Endothelial cell of umbilical vein (primary cell): ENCODE measurements at regions of chr1 and their contacts with region 1.

Region 1: DNA sequence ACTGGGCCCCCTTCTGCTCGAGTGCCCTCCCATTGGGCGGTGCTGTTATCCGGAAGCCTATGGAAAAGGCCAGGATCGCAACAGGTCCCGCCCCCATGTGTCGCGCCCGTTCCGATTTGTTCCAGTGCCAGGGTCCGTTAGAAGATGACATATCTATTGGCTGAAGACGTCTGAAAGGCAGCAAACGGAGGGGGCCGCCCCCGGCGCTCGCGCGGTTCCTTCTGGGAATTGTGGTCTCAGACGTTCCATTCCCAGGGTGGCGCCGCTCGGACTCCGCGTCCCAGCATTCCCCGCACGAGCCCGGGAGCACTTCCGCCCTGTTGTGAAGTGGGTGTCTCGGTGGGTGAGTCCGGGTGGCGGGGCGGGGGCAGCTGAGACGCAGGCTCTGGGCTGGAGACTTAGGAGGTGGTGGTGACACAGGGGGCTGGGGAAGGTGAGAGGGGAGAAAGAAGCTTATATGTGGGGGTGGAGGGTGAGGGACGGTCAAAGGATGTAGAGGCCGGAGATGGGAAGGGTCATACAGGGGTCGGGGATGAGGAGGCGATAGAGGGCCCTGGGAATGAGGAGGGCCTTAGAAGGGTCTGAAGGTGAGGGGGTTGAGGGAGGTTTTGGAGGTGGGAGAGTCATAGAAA is at the start of gene ZSCAN20:
- DNase-seq: peak; percentile 99
- H3K4me3 ChIP-seq: peak within 1 kb of the TSS; percentile 70 to 73 (median 72)
- H3K27ac ChIP-seq: peak within 1 kb of the TSS; percentile 63
- H3K4me1 ChIP-seq: peaks cover 13% of the 10 kb centered on the region
- H3K27me3 ChIP-seq: no peaks in the 10 kb centered on the region
- CTCF ChIP-seq: no peak
- POLR2A ChIP-seq: peak; percentile 71
- total RNA-seq, gene ZSCAN20: 4.7 and 5.8 TPM in 2 replicates

Region 2: GRCh38 chr1:33127001-33127791 is 345.3 kb before region 1 on chr1:
- CTCF ChIA-PET with region 1: interaction called, 12 read pairs
- POLR2A ChIA-PET with region 1: no interaction called
- dilution Hi-C with region 1: no loop called
- intact Hi-C with region 1: loop called (anchors 1 kb)
- DNase-seq: peak; percentile 99
- H3K4me3 ChIP-seq: peak overlapping the region; percentile 72 to 92 (median 88)
- H3K27ac ChIP-seq: peak overlapping the region; percentile 68
- H3K4me1 ChIP-seq: peaks cover 10% of the 10 kb centered on the region
- H3K27me3 ChIP-seq: peaks cover 0 to 2% of the 10 kb centered on the region in 2 experiments
- CTCF ChIP-seq: peak; percentile 97 to 99
- POLR2A ChIP-seq: peak; percentile 96

Region 3: DNA sequence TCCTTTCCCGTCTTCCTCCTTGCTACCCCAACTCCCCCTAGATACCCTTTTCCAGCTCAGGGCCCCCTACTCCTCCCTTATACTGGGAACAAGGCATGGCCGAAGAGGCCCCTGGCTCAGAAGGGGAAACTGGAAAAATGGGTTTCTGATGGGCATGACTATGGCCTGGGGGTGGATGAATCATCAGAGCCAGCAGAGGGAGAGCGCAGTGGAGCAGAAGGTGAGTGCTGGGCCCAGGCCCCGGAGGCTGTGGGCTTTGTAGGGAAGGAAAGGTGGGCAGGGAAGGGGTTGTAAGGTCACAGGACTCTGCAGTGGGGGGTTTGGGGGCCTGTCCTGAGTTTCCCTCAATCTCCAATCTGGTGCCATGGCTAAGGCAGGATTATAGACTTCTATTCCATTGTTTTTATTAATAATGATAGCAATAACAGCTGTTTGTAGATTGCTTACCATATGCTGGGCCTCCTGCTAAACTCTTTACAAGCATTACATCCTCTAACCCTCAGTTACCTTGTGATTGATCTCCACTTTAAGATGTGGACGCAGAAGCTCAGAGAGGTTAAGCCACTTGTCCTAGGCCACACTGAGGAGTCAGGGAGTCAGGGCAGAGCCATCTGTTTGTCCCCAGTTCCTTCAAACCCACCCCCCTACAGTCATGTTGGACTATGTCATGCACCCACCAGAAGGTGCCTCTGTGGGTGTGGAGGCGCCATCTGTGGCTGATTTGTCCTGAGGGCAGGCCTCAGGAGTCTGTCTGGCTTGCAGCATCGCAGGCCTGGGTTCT is 252.4 kb before region 1 on chr1:
- CTCF ChIA-PET with region 1: interaction called, 16 read pairs
- POLR2A ChIA-PET with region 1: no interaction called
- dilution Hi-C with region 1: no loop called
- intact Hi-C with region 1: loop called (anchors 1 kb)
- DNase-seq: no peak
- H3K4me3 ChIP-seq: no peak overlapping the region
- H3K27ac ChIP-seq: no peak overlapping the region
- H3K4me1 ChIP-seq: peaks cover 5% of the 10 kb centered on the region
- H3K27me3 ChIP-seq: peaks cover 3 to 12% of the 10 kb centered on the region in 2 experiments
- CTCF ChIP-seq: no peak
- POLR2A ChIP-seq: no peak

Region 4: GRCh38 chr1:33367485-33368405 is 104.7 kb before region 1 on chr1:
- CTCF ChIA-PET with region 1: interaction called, 27 read pairs
- POLR2A ChIA-PET with region 1: no interaction called
- dilution Hi-C with region 1: no loop called
- intact Hi-C with region 1: loop called (anchors 1 kb)
- DNase-seq: peak; percentile 67
- H3K4me3 ChIP-seq: no peak overlapping the region
- H3K27ac ChIP-seq: no peak overlapping the region
- H3K4me1 ChIP-seq: no peaks in the 10 kb centered on the region
- H3K27me3 ChIP-seq: no peaks in the 10 kb centered on the region
- CTCF ChIP-seq: peak; percentile 90 to 98
- POLR2A ChIP-seq: no peak

Region 5: GRCh38 chr1:33424205-33424604 is 48.3 kb before region 1 on chr1:
- CTCF ChIA-PET with region 1: no interaction called
- POLR2A ChIA-PET with region 1: no interaction called
- dilution Hi-C with region 1: no loop called
- intact Hi-C with region 1: no loop called
- DNase-seq: peak; percentile 16
- H3K4me3 ChIP-seq: no peak overlapping the region
- H3K27ac ChIP-seq: no peak overlapping the region
- H3K4me1 ChIP-seq: peaks cover 14% of the 10 kb centered on the region
- H3K27me3 ChIP-seq: no peaks in the 10 kb centered on the region
- CTCF ChIP-seq: no peak
- POLR2A ChIP-seq: no peak

Region 6: DNA sequence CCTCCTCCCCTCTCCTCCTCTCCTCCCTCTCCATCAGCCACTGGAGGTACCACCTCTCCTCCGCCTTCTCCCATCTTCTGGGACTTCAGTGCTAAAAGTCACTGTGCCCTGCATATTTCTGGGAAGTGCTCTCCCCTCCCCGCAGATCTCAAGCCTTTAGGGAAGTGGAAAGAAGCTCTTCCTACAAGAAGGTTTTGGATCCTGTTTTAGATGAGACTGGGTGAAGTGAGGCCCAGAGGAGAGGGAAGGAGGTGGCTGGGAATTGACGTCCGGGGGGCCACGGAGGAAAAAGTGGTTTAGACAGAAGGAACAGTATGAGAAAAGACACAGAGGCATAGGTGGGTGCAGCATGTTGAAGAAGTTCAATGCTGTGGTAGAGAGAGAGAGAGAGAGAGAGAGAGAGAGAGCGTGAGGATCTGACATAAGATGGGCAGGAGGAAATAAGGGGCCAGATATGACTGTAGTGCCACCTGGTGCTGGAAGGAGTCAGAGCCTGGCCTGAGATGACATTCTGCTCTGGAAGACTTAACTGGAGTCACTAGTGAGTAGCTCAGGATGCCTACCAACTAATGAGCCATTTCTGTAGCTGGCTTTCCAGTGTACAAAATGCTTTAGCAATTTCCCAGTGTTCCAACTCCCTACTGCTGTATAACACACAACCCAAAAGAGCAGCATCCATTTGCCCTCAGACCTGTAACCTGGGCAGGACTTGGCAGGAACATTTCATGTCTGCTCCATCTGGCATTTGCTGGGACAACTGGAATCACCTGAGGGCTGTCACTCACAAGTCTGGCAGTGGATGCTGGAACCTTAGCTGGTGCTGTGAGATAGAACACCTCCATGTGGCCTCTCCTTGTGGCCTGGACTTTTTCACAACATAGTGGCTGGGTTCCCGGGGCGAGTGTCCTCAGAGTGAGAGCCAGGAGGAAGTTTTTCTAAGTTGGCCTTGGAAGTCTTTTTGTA is 16.6 kb before region 1 on chr1:
- CTCF ChIA-PET with region 1: interaction called, 37 read pairs
- POLR2A ChIA-PET with region 1: no interaction called
- dilution Hi-C with region 1: no loop called
- intact Hi-C with region 1: no loop called
- DNase-seq: peak; percentile 67
- H3K4me3 ChIP-seq: no peak overlapping the region
- H3K27ac ChIP-seq: no peak overlapping the region
- H3K4me1 ChIP-seq: peaks cover 10% of the 10 kb centered on the region
- H3K27me3 ChIP-seq: no peaks in the 10 kb centered on the region
- CTCF ChIP-seq: peak; percentile 68 to 69
- POLR2A ChIP-seq: no peak

Region 7: GRCh38 chr1:33494929-33495328 is 22.5 kb after region 1 on chr1:
- CTCF ChIA-PET with region 1: no interaction called
- POLR2A ChIA-PET with region 1: no interaction called
- dilution Hi-C with region 1: no loop called
- intact Hi-C with region 1: no loop called
- DNase-seq: no peak
- H3K4me3 ChIP-seq: no peak overlapping the region
- H3K27ac ChIP-seq: no peak overlapping the region
- H3K4me1 ChIP-seq: no peaks in the 10 kb centered on the region
- H3K27me3 ChIP-seq: no peaks in the 10 kb centered on the region
- CTCF ChIP-seq: no peak
- POLR2A ChIP-seq: no peak

Region 8: DNA sequence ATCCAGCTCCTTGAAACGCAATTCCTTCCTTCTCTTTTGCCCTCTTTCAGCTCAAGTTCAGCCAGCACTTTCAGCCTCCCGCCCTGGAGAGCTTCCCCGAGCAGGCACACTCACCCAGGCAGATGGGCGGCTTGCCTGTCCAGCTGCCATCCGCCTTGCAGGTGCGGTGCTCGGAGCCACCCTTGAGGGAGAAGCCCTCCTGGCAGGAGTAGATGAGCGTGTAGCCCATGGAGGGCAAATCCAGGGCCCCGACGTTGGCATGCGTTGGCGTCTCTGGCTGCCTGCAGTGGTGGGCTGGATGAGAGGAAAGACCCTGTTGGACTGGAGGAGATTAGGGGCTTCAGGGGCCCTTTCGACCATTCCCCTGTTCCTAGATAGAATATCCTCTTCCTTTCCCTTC is 60.5 kb after region 1 on chr1:
- CTCF ChIA-PET with region 1: no interaction called
- POLR2A ChIA-PET with region 1: no interaction called
- dilution Hi-C with region 1: no loop called
- intact Hi-C with region 1: no loop called
- DNase-seq: no peak
- H3K4me3 ChIP-seq: no peak overlapping the region
- H3K27ac ChIP-seq: no peak overlapping the region
- H3K4me1 ChIP-seq: no peaks in the 10 kb centered on the region
- H3K27me3 ChIP-seq: no peaks in the 10 kb centered on the region
- CTCF ChIP-seq: no peak
- POLR2A ChIP-seq: no peak

Region 9: DNA sequence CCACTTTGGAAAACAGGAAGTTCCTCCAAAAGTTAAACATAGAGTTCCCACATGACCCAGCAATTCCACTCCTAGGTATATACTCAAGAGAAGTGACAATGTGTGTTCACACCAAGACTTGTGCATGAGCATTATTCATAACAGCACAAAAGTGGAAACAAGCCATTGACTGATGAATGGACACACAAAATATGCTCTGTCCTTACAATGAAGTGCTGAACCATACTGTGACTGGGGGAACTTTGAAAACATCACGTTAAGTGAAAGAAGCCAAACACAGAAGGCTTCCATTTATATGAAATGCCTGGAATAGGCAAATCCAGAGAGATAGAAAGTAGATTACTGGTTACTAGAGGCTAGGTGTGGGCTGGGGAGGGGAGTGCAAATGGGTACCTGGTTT is 150.3 kb after region 1 on chr1:
- CTCF ChIA-PET with region 1: no interaction called
- POLR2A ChIA-PET with region 1: no interaction called
- dilution Hi-C with region 1: no loop called
- intact Hi-C with region 1: no loop called
- DNase-seq: no peak
- H3K4me3 ChIP-seq: no peak overlapping the region
- H3K27ac ChIP-seq: no peak overlapping the region
- H3K4me1 ChIP-seq: no peaks in the 10 kb centered on the region
- H3K27me3 ChIP-seq: no peaks in the 10 kb centered on the region
- CTCF ChIP-seq: no peak
- POLR2A ChIP-seq: no peak